ENCODE measurements at regions of chr3 and their contacts with region 1.

Region 1: GRCh38 chr3:4350789-4351163 is 47.6 kb downstream of the SETMAR start:
- DNase-seq: no peak
- H3K4me3 ChIP-seq: peak overlapping the region; percentile 26 to 75 (median 49)
- H3K27ac ChIP-seq: peak overlapping the region; percentile 86
- H3K4me1 ChIP-seq: peaks cover 13% of the 10 kb centered on the region
- H3K27me3 ChIP-seq: no peaks in the 10 kb centered on the region
- CTCF ChIP-seq: peak; percentile 48 to 67
- POLR2A ChIP-seq: no peak

Region 2: DNA sequence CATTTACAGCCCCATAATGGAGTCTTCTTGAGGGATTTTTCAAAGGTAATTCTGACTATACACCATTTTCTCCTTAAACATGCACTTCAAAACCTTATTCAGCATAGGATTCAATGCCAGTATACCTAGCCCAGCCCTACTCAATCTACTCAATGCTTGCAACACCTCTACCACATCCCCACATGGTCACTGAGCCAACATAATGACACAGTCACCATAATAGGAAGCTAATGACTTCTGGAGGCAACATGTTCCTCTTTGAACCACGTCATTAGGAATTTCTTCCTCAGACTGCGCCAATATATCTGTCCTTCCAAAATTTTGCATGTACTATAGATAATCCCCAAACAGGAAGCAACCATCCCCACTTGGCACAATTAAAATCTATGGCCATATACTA is 201.5 kb before region 1 on chr3:
- CTCF ChIA-PET with region 1: no interaction called
- POLR2A ChIA-PET with region 1: no interaction called
- dilution Hi-C with region 1: no loop called
- intact Hi-C with region 1: no loop called
- DNase-seq: no peak
- H3K4me3 ChIP-seq: no peak overlapping the region
- H3K27ac ChIP-seq: no peak overlapping the region
- H3K4me1 ChIP-seq: no peaks in the 10 kb centered on the region
- H3K27me3 ChIP-seq: no peaks in the 10 kb centered on the region
- CTCF ChIP-seq: no peak
- POLR2A ChIP-seq: no peak

Region 3: GRCh38 chr3:4326868-4327267 is 23.9 kb before region 1 on chr3:
- CTCF ChIA-PET with region 1: interaction called, 10 read pairs
- POLR2A ChIA-PET with region 1: no interaction called
- dilution Hi-C with region 1: no loop called
- intact Hi-C with region 1: no loop called
- DNase-seq: no peak
- H3K4me3 ChIP-seq: no peak overlapping the region
- H3K27ac ChIP-seq: no peak overlapping the region
- H3K4me1 ChIP-seq: no peaks in the 10 kb centered on the region
- H3K27me3 ChIP-seq: no peaks in the 10 kb centered on the region
- CTCF ChIP-seq: no peak
- POLR2A ChIP-seq: no peak

Region 4: DNA sequence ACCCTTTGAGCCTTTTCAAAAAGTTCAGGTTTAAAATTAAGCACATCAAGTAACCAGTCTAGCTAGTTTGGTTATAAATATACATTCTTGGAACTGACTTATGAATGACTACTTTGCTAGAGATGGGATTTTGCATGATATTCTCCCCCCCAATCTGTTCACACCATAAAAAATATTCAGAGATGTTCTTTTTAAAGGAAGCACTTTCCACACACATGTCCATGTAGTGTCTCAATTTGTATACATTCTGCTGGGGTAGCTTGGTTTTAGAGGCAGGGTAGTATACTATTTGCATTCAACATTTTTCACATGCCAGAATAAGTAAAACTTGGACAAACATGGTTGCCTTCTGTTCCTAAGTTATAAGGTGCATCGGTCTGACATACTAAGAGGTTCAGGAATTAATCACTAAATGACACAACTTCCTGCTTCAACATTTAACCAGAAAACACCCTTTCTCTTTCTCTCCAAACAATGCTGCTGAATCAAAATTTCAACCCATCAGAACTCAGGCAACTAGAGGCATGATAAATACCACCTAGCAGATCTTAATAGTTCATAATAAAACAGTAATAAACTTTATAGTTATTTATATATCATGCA is 59.3 kb after region 1 on chr3:
- CTCF ChIA-PET with region 1: interaction called, 12 read pairs
- POLR2A ChIA-PET with region 1: no interaction called
- dilution Hi-C with region 1: no loop called
- intact Hi-C with region 1: no loop called
- DNase-seq: peak; percentile 42
- H3K4me3 ChIP-seq: no peak overlapping the region
- H3K27ac ChIP-seq: no peak overlapping the region
- H3K4me1 ChIP-seq: peaks cover 11% of the 10 kb centered on the region
- H3K27me3 ChIP-seq: no peaks in the 10 kb centered on the region
- CTCF ChIP-seq: no peak
- POLR2A ChIP-seq: no peak

Region 5: DNA sequence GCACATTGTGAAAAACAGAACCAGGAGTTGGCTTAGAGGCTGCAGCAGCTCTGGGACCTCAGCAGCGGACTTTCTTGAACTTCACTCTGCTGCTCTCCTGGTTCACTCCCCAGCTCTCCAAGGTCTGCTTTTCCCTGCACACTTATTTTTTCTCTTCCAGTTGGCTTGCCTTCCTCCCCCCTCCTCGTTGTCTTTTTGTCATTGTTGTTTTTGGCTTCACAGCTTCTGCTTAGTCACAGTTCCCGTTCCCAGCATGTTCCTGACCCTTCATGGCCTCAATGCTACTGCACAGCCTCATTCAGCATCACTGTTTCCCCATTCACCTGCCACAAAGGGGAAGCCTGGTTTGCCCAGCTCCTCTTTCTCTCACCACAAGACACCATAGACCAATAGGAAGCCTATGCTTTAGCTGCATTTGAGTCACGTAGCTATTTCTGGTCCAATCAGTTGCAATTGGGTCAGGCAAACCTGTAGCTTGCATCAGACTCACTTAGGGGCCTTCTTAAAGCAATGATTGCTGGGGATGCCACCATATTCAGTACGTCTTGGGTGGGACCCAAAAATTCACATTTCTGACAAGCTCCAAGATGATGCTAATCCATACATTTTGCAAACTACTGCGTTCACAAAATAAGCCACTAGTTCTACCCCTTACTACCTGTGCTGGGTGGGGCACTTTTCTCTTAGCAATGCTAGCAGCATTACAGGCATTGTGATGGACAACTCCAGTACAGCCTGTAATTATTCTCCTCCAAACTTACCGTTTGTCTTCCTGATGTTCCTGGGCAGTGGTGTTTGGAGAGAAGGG is 124.1 kb after region 1 on chr3:
- CTCF ChIA-PET with region 1: interaction called, 36 read pairs
- POLR2A ChIA-PET with region 1: no interaction called
- dilution Hi-C with region 1: no loop called
- intact Hi-C with region 1: no loop called
- DNase-seq: peak; percentile 97
- H3K4me3 ChIP-seq: no peak overlapping the region
- H3K27ac ChIP-seq: peak overlapping the region; percentile 60
- H3K4me1 ChIP-seq: peaks cover 22% of the 10 kb centered on the region
- H3K27me3 ChIP-seq: peaks cover 0 to 3% of the 10 kb centered on the region in 2 experiments
- CTCF ChIP-seq: no peak
- POLR2A ChIP-seq: no peak

Region 6: DNA sequence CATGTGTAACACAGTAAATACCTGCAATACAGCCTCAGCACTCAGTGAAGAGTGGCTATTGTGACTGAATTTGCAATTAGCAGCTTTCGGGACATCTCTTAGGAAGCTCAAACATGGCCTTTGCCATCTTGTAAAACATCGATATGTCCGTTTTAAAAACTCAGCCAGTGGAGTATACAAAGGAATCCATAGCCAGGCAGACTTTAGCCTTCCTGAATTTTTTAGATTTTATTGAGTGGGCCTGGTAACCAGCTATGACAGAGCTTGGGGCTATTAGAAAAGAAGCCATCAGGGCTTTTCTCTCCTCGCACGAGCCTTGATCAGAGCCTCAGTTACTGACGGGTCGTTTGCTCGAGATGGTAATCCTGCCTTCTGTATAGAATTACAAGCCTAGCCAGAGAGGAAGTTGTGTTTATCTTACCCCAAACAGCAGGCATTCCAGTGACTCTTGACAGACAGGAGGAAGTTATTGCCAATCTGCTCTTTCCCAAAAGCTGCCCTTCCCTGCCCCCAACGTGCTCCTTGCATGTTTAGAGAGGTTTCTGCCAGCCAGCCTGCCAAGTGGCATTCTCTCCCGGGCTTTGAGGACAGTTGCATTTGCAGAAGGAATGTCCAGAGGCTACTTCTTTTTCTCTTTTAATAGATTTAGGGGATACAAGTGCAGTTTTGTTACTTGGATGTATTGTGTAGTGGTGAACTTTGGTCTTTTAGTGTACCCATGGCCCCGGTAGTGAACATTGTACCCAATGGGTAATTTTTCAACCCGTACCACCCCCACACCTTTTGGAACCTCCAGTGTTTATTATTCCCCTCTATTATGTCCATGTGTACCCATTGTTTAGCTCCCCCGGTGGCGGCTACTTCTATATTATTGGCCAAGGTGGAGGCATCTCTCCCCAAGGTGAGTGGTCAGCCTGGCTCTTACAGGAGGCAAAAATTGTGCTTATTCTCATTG is 183.0 kb after region 1 on chr3:
- CTCF ChIA-PET with region 1: interaction called, 23 read pairs
- POLR2A ChIA-PET with region 1: no interaction called
- dilution Hi-C with region 1: no loop called
- intact Hi-C with region 1: no loop called
- DNase-seq: peak; percentile 82
- H3K4me3 ChIP-seq: peak overlapping the region in 1 of 3 experiments; percentile 5
- H3K27ac ChIP-seq: no peak overlapping the region
- H3K4me1 ChIP-seq: peaks cover 14% of the 10 kb centered on the region
- H3K27me3 ChIP-seq: no peaks in the 10 kb centered on the region
- CTCF ChIP-seq: no peak
- POLR2A ChIP-seq: peak; percentile 30

Region 7: GRCh38 chr3:4633078-4634004 is 282.6 kb after region 1 on chr3:
- CTCF ChIA-PET with region 1: interaction called, 348 read pairs
- POLR2A ChIA-PET with region 1: no interaction called
- dilution Hi-C with region 1: no loop called
- intact Hi-C with region 1: loop called (anchors 1 kb)
- DNase-seq: peak; percentile 72
- H3K4me3 ChIP-seq: no peak overlapping the region
- H3K27ac ChIP-seq: no peak overlapping the region
- H3K4me1 ChIP-seq: no peaks in the 10 kb centered on the region
- H3K27me3 ChIP-seq: no peaks in the 10 kb centered on the region
- CTCF ChIP-seq: peak; percentile 67 to 69
- POLR2A ChIP-seq: no peak